AG04449 (cell line): ENCODE measurements at regions of chr7 and their contacts with region 1.

Region 1: GRCh38 chr7:133051066-133051465 is 30.8 kb downstream of the CHCHD3 start:
- DNase-seq: no peak
- H3K4me3 ChIP-seq: no peak overlapping the region
- CTCF ChIP-seq: no peak

Region 2: GRCh38 chr7:132977234-132977633 is 73.8 kb before region 1 on chr7:
- CTCF ChIA-PET with region 1: no interaction called
- POLR2A ChIA-PET with region 1: no interaction called
- DNase-seq: no peak
- H3K4me3 ChIP-seq: no peak overlapping the region
- CTCF ChIP-seq: no peak

Region 3: GRCh38 chr7:133039614-133040013 is 11.5 kb before region 1 on chr7:
- CTCF ChIA-PET with region 1: interaction called, 12 read pairs
- POLR2A ChIA-PET with region 1: interaction called, 3 read pairs
- DNase-seq: no peak
- H3K4me3 ChIP-seq: no peak overlapping the region
- CTCF ChIP-seq: no peak